ENCODE measurements at regions of chr12 and their contacts with region 1.

Region 1: DNA sequence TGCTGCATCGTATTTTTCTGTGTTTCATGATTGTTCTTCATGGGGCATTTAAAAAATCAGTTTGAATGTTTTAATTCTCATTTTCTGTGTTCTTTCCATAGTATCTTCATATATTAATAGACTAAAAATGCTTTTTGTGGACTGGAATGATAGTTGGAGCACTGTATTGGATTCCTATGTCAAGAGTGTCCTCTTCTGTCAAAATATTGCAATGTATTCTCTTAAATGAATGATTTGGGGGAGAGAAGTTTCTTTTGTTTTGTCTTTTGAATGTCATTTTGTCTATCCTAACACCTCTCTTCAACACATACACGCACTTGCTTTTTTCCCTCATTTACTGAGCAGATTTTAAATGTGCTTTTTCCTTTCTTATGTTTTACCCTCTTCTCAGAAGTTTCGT is 4.7 kb upstream of the EIF2S3B start:
- DNase-seq: no peak
- H3K4me3 Mint-ChIP-seq: no peak overlapping the region
- H3K27ac Mint-ChIP-seq: no peak overlapping the region
- H3K4me1 Mint-ChIP-seq: peaks cover 8% of the 10 kb centered on the region
- H3K27me3 Mint-ChIP-seq: peaks cover 11% of the 10 kb centered on the region

Region 2: GRCh38 chr12:10241727-10242126 is 259.3 kb before region 1 on chr12:
- intact Hi-C with region 1: loop called (anchors 2 kb)
- DNase-seq: no peak
- H3K4me3 Mint-ChIP-seq: no peak overlapping the region
- H3K27ac Mint-ChIP-seq: no peak overlapping the region
- H3K4me1 Mint-ChIP-seq: peaks cover 25% of the 10 kb centered on the region
- H3K27me3 Mint-ChIP-seq: peaks cover 42% of the 10 kb centered on the region

Region 3: DNA sequence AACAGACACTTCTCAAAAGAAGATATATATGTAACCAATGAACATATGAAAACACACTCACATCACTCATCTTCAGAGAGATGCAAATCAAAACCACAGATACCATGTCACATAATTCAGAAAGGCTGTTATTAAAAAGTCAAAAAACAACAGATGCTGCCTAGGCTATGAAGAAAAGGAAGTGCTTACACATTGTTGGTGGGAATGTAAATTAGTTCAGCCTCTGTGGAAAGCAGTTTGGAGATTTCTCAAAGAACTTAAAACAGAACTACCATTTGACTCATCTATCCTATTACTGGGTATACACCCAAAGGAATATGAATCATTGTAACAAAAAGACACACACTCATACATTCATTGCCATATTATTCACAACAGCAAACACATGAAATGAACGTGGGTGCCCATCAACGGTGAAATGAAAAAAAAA is 39.8 kb after region 1 on chr12:
- intact Hi-C with region 1: loop called (anchors 1 kb)
- DNase-seq: no peak
- H3K4me3 Mint-ChIP-seq: no peak overlapping the region
- H3K27ac Mint-ChIP-seq: peak overlapping the region; percentile 57
- H3K4me1 Mint-ChIP-seq: peaks cover 12% of the 10 kb centered on the region
- H3K27me3 Mint-ChIP-seq: peaks cover 5% of the 10 kb centered on the region

Measured in activated T-helper 1 cell treated with anti-CD3 and anti-CD28 coated beads, Interleukin-12 subunit alpha, Interleukin-12 subunit beta, Interleukin-2, Interleukin-4 antibody, amounts not matched to agents 30 ng/mL and 10 ng/mL and 1 ng/mL, durations not matched to agents 14 hours and 24 hours and 36 hours (primary cell).